Posterior cingulate gyrus (tissue), 11 donors: ENCODE measurements at regions of chr3 and their contacts with region 1.

Region 1: DNA sequence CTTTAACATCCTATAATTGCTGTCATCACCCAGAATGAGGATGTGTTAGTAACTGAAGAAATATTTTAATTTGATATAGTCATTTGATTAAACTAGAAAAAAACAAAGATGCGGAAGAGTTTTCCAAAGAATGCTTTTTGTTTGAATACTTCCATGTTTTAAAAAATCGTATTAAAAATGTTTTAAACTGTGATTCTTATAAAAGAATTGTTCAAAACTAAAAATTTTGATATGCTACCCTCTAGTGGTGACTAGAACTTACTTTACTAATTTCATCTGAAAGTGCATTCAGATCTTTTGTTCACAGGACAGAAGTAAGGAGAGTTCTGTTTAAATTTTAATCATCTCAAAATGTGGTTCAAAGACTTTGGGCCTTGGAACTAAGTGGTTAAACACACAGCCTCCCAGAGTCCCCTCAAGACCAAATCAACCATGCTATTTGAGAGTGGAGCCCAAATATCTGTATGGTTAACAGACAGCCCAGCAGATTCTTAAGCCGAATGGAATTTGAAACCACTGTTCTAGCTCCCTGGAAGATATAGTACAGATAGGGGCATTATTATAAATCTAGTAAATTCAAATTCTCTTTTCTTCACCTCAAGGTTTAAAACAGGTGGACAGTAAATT is 45.3 kb upstream of the SYNPR start:
- DNase-seq: no peak

Region 2: GRCh38 chr3:62622553-62623193 is 610.2 kb before region 1 on chr3:
- intact Hi-C with region 1: loop called (anchors 2 kb)
- DNase-seq: peak in 1 of 10 donors; percentile 28

Region 3: GRCh38 chr3:63135367-63135766 is 97.5 kb before region 1 on chr3:
- intact Hi-C with region 1: no loop called
- DNase-seq: no peak

Region 4: DNA sequence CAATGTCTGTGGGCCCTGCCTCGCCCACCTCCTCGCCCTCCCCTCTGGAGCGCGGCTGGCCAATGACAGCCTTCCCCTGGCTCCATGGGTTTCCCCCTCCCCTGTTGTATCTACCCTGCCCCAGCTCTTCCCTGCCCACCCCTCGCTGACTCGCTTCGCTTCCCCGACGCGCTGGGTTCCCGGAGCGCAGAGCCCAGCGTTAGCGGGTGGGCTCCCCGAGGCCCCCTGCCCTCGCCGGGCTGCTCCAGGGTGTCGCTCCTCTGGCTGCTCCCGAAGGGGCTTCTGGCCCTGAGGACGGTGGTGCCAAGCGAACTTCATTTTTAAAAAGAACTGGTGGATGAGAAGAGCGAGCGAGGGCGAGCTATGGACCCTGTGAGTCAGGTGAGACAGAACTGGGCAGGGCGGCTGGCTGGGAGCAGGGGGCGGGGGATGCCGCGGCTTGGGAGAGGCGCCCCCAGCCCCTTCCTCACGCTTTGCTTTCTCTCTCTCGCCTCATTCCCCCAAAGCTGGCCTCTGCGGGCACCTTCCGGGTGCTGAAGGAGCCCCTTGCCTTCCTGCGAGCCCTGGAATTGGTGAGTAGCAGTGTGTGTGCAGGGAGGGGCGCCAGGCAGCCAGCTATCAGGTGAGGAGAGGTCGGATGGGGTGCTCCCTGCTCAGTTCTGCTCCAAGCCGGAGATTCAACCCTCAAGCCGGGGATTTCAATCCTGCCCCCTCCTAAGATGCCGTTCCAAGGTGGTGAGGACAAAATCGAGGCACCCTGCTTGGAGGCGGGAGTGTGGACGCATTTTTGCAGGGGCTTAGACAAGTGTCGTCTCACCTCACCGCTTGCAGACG is 45.5 kb after region 1 on chr3 and contains the start of gene SYNPR:
- intact Hi-C with region 1: no loop called
- DNase-seq: peak in 8 of 10 donors; percentile 19 to 88 (median 37)